ENCODE measurements at regions of chr5 and their contacts with region 1.

Region 1: DNA sequence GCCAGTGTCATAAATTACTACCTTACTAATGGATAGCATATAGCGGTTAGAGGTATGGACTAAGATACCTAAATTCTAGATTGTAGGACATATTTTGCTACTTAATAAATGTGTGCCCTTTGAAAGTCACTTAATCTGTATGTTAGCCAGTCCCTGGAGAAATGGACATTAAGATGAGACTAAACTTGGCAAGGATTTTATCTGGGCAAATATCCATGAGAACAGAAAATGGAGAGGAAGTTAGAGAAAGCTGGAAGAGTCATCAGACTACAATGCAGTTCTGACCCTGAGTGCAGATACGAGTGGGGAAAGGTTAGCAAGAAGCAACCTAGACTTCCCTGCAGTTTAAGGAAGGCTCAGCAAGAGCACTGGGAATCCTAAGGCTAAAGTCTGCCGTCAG is 33.0 kb downstream of the TBCA start:
- DNase-seq: no peak
- ATAC-seq: no peak
- H3K4me3 ChIP-seq: no peak overlapping the region
- H3K4me3 Mint-ChIP-seq: no peak overlapping the region
- H3K27ac ChIP-seq: no peak overlapping the region
- H3K27ac Mint-ChIP-seq: no peak overlapping the region
- H3K4me1 ChIP-seq: no peaks in the 10 kb centered on the region
- H3K4me1 Mint-ChIP-seq: peaks cover 14 to 23% (median 17%) of the 10 kb centered on the region in 3 donors
- H3K27me3 ChIP-seq: no peaks in the 10 kb centered on the region
- H3K27me3 Mint-ChIP-seq: no peaks in the 10 kb centered on the region

Region 2: GRCh38 chr5:77727190-77727589 is 16.0 kb before region 1 on chr5:
- CTCF ChIA-PET with region 1: no interaction called
- POLR2A ChIA-PET with region 1: interaction called in 1 of 2 experiments, 10 read pairs
- DNase-seq: no peak
- ATAC-seq: no peak
- H3K4me3 ChIP-seq: no peak overlapping the region
- H3K4me3 Mint-ChIP-seq: no peak overlapping the region
- H3K27ac ChIP-seq: no peak overlapping the region
- H3K27ac Mint-ChIP-seq: no peak overlapping the region
- H3K4me1 ChIP-seq: no peaks in the 10 kb centered on the region
- H3K4me1 Mint-ChIP-seq: peaks cover 29 to 55% (median 33%) of the 10 kb centered on the region in 3 donors
- H3K27me3 ChIP-seq: no peaks in the 10 kb centered on the region
- H3K27me3 Mint-ChIP-seq: no peaks in the 10 kb centered on the region

Region 3: GRCh38 chr5:77906806-77907205 is 163.6 kb after region 1 on chr5:
- CTCF ChIA-PET with region 1: no interaction called
- POLR2A ChIA-PET with region 1: no interaction called
- DNase-seq: no peak
- ATAC-seq: no peak
- H3K4me3 ChIP-seq: no peak overlapping the region
- H3K4me3 Mint-ChIP-seq: no peak overlapping the region
- H3K27ac ChIP-seq: no peak overlapping the region
- H3K27ac Mint-ChIP-seq: no peak overlapping the region
- H3K4me1 ChIP-seq: no peaks in the 10 kb centered on the region
- H3K4me1 Mint-ChIP-seq: no peaks in the 10 kb centered on the region
- H3K27me3 ChIP-seq: no peaks in the 10 kb centered on the region
- H3K27me3 Mint-ChIP-seq: peaks cover 3% of the 10 kb centered on the region in 2 donors

Region 4: GRCh38 chr5:78090002-78090401 is 346.8 kb after region 1 on chr5:
- CTCF ChIA-PET with region 1: no interaction called
- POLR2A ChIA-PET with region 1: no interaction called
- DNase-seq: no peak
- ATAC-seq: no peak
- H3K4me3 ChIP-seq: no peak overlapping the region
- H3K4me3 Mint-ChIP-seq: no peak overlapping the region
- H3K27ac ChIP-seq: no peak overlapping the region
- H3K27ac Mint-ChIP-seq: no peak overlapping the region
- H3K4me1 ChIP-seq: no peaks in the 10 kb centered on the region
- H3K4me1 Mint-ChIP-seq: no peaks in the 10 kb centered on the region
- H3K27me3 ChIP-seq: no peaks in the 10 kb centered on the region
- H3K27me3 Mint-ChIP-seq: no peaks in the 10 kb centered on the region